ENCODE measurements at regions of chr4 and their contacts with region 1.

Region 1: DNA sequence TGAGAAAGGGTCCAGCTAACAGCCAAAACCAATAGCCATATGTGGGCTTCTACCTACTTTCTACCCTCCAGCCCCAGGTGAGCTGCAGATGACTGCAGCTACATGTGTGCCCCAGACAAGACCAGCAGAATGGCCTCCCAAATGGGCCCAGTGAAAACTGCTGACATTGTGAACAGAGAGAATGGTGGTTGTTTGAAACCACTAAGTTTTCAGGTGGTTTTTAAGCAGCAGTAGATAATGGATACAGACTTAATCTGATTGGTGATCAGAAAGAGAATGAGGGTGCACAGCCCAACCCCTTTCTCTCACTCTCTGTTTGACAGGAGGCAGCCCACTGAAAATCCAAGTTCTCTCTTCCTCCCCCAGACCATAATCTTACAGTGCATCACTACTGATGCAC is 42.5 kb upstream of the BBS12 start:
- DNase-seq: peak; percentile 34
- H3K4me3 Mint-ChIP-seq: no peak overlapping the region
- H3K27ac Mint-ChIP-seq: peak overlapping the region; percentile 70
- H3K4me1 Mint-ChIP-seq: peaks cover 72% of the 10 kb centered on the region
- H3K27me3 Mint-ChIP-seq: peaks cover 8% of the 10 kb centered on the region

Region 2: DNA sequence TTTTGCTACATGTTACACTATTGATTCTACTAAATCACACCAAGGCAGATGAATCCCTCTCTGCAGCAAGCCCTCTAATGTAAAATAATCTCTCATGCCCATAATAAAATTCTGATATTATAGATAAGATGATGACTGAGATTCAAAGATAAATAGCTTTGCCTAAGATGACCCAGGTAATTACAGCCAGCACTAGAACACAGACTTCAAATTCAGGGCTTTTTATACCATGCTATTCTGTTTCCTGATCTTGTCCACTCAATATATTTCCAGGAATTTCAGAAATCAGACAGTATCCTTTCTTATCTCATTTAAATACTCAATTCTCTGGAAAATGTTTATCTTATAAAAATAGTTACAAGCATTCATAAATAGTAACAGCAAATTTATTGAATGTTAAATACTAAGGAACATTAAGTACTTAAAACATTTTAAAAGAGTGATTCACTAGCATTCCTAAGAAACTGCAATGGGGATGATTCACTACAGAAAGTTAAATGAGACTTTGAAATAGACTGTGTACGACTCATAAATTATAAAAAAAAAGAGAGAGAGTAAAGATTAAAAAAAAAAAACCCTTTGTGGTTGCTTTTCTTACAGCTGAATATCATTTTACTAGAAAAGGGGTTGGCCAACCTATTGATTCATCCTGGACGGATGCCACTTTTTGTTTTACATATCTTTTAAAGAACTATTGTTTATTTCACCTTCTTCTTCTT is 23.3 kb before region 1 on chr4:
- intact Hi-C with region 1: loop called (anchors 1 kb)
- DNase-seq: no peak
- H3K4me3 Mint-ChIP-seq: peak overlapping the region; percentile 60
- H3K27ac Mint-ChIP-seq: peak overlapping the region; percentile 78
- H3K4me1 Mint-ChIP-seq: peaks cover 70% of the 10 kb centered on the region
- H3K27me3 Mint-ChIP-seq: no peaks in the 10 kb centered on the region

Region 3: DNA sequence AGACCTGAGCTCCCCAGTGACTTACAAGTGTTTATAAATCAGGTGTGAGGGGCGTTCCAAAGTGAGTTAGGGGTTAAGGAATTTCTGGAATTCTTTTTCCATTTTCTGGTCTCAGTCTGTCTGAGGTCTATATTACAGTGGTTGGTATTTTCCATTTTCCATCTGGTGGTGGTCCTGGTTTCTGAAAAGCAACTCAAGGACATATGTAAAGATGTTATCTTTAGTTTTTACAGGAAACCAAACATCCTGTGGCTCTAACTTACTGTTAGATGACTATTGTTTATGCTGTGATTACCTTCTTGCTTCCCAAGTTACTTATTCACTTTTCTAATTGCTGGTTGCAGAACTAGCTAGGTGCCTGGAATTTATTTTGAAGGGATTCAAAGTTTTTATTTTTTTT is 15.6 kb before region 1 on chr4:
- intact Hi-C with region 1: loop called (anchors 1 kb)
- DNase-seq: no peak
- H3K4me3 Mint-ChIP-seq: no peak overlapping the region
- H3K27ac Mint-ChIP-seq: peak overlapping the region; percentile 35
- H3K4me1 Mint-ChIP-seq: peaks cover 41% of the 10 kb centered on the region
- H3K27me3 Mint-ChIP-seq: peaks cover 1% of the 10 kb centered on the region

Region 4: DNA sequence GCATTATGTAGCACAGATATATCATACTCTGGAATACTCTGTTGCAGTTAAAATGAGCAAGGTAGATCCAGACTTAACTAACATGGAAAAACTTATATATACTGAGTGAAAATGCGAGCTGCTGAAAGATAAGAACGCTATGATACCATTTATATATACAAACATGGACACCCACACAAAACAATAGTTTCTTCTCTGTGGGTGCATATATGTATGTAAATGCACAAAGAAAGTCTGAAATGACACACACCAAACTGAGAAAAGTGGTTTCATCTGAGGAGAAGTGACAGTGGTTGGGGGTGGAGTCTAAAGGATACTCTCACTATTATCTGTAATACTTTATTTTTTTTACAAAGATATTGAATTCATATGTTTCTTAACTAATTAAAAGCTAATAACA is 124.5 kb after region 1 on chr4:
- intact Hi-C with region 1: no loop called
- DNase-seq: no peak
- H3K4me3 Mint-ChIP-seq: no peak overlapping the region
- H3K27ac Mint-ChIP-seq: no peak overlapping the region
- H3K4me1 Mint-ChIP-seq: peaks cover 9% of the 10 kb centered on the region
- H3K27me3 Mint-ChIP-seq: peaks cover 23% of the 10 kb centered on the region

Measured in activated T-helper 2 cell treated with anti-CD3 and anti-CD28 coated beads, Interferon-gamma antibody, Interleukin-2, Interleukin-4, amounts not matched to agents 10 μg/mL and 5 μg/mL and 100 μg/mL, durations not matched to agents 14 hours and 24 hours and 36 hours (primary cell).